Activated CD4-positive, alpha-beta T cell treated with anti-CD3 and anti-CD28 coated beads, Interleukin-2, amount 10 ng/mL, durations not matched to agents 24 days and 14 days (primary cell): ENCODE measurements at regions of chr4 and their contacts with region 1.

Region 1: GRCh38 chr4:24529555-24529954 is 54.8 kb downstream of the DHX15 start:
- DNase-seq: no peak
- H3K4me3 Mint-ChIP-seq: no peak overlapping the region
- H3K27ac Mint-ChIP-seq: no peak overlapping the region
- H3K4me1 Mint-ChIP-seq: no peaks in the 10 kb centered on the region
- H3K27me3 Mint-ChIP-seq: no peaks in the 10 kb centered on the region

Region 2: GRCh38 chr4:24544208-24544988 is 14.8 kb after region 1 on chr4:
- intact Hi-C with region 1: loop called (anchors 2 kb)
- DNase-seq: no peak
- H3K4me3 Mint-ChIP-seq: no peak overlapping the region
- H3K27ac Mint-ChIP-seq: no peak overlapping the region
- H3K4me1 Mint-ChIP-seq: peaks cover 40% of the 10 kb centered on the region
- H3K27me3 Mint-ChIP-seq: no peaks in the 10 kb centered on the region